ENCODE measurements at regions of chr14 and their contacts with region 1.

Region 1: GRCh38 chr14:89033756-89034155 is 209.3 kb downstream of the TTC8 start:
- DNase-seq: no peak
- H3K4me3 ChIP-seq: no peak overlapping the region
- H3K27ac ChIP-seq: no peak overlapping the region
- H3K4me1 ChIP-seq: no peaks in the 10 kb centered on the region
- H3K27me3 ChIP-seq: no peaks in the 10 kb centered on the region
- CTCF ChIP-seq: no peak
- POLR2A ChIP-seq: no peak

Region 2: GRCh38 chr14:89085737-89086382 is 52.1 kb after region 1 on chr14:
- intact Hi-C with region 1: no loop called
- DNase-seq: peak; percentile 75
- H3K4me3 ChIP-seq: no peak overlapping the region
- H3K27ac ChIP-seq: peak overlapping the region in 1 of 2 donors; percentile 18
- H3K4me1 ChIP-seq: no peaks in the 10 kb centered on the region
- H3K27me3 ChIP-seq: no peaks in the 10 kb centered on the region
- CTCF ChIP-seq: no peak
- POLR2A ChIP-seq: no peak

Region 3: GRCh38 chr14:89787525-89787924 is 753.8 kb after region 1 on chr14:
- intact Hi-C with region 1: loop called (anchors 5 kb)
- DNase-seq: no peak
- H3K4me3 ChIP-seq: no peak overlapping the region
- H3K27ac ChIP-seq: no peak overlapping the region
- H3K4me1 ChIP-seq: no peaks in the 10 kb centered on the region
- H3K27me3 ChIP-seq: no peaks in the 10 kb centered on the region
- CTCF ChIP-seq: no peak
- POLR2A ChIP-seq: no peak

Region 4: DNA sequence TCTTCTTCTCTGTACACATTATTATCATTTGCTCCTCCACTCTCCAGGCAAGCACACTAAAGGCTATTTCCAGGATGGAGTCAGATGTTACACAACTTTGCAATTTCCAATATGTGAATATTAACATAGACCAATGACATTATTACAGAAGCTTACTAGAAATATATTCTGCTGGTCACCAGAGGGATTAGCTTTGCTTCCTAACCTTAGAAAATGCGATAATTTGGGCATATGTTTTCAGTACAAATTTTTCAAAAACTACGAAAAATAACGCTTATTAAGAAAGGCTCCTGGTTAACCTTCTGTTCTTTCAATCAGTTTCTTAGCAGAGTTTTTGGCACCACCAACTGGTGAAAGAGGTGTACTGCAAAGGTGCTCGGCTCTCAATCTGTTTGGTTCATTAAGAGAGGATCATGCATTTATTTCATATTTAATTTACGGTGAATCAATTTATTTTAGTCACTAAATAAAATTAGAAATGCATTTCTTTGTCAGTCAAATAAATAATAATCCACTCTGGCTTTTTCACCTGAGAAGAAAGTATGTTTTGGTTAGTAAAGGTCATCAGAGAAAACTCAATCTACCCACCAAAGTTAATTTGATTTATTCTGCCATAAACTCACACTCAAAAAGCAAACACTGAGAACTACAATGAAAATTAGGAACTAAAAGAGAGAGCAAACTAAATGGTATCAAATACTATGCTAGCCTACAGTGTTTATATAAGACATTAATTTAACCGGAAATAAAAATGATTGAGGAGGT is 881.5 kb after region 1 on chr14:
- intact Hi-C with region 1: loop called (anchors 10 kb)
- DNase-seq: peak; percentile 83
- H3K4me3 ChIP-seq: no peak overlapping the region
- H3K27ac ChIP-seq: no peak overlapping the region
- H3K4me1 ChIP-seq: no peaks in the 10 kb centered on the region
- H3K27me3 ChIP-seq: no peaks in the 10 kb centered on the region
- CTCF ChIP-seq: peak; percentile 92 to 95 (median 94)
- POLR2A ChIP-seq: no peak